ENCODE measurements at regions of chr2 and their contacts with region 1.

Region 1: GRCh38 chr2:137823196-137823595 is 141.1 kb upstream of the HNMT start:
- DNase-seq: no peak
- ATAC-seq: no peak
- H3K4me3 ChIP-seq: no peak overlapping the region
- H3K4me3 Mint-ChIP-seq: no peak overlapping the region
- H3K27ac ChIP-seq: no peak overlapping the region
- H3K27ac Mint-ChIP-seq: no peak overlapping the region
- H3K4me1 ChIP-seq: no peaks in the 10 kb centered on the region
- H3K4me1 Mint-ChIP-seq: no peaks in the 10 kb centered on the region
- H3K27me3 ChIP-seq: no peaks in the 10 kb centered on the region
- H3K27me3 Mint-ChIP-seq: peaks cover 7% of the 10 kb centered on the region
- CTCF ChIP-seq: no peak

Region 2: DNA sequence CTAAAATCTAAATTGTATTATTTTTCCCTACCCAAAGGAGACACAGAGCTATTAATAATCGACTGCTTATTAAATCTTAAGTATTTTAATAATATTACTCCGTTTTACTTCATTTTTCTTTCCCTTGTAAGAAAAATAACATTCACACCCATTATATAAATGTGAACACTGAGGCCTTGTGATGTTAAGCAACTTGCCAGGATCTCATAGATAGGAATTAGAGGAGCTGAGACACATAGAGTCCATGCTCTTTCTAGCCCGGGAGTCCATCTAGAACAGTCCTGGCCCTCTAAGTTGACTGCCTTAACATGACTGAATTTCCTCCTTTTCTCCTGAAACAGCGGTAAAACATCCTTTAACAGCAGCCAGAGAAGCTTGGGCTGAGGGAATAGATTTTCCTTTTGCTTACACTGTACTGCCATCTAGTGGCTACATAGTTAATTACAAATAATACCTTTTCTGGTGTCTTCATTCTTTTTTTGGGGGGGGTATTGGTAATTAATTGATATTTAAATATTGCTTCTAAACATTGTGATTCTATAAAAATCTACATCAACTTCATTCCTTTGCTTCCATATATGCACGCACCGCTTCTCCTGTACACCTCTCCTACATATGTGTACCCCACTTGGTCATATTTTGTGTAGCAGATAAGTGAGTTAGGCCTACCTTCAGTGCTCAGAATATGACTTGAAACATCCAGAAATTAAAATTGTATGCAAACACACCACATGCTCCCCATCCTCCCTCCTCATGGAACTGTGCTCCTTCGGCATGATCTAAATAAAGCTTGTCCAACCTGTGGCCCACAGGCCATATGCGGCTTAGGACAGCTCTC is 15.3 kb after region 1 on chr2:
- CTCF ChIA-PET with region 1: interaction called, 14 read pairs
- POLR2A ChIA-PET with region 1: no interaction called
- intact Hi-C with region 1: no loop called
- DNase-seq: peak in 3 of 9 experiments; percentile 1 to 48 (median 34)
- ATAC-seq: no peak
- H3K4me3 ChIP-seq: no peak overlapping the region
- H3K4me3 Mint-ChIP-seq: no peak overlapping the region
- H3K27ac ChIP-seq: no peak overlapping the region
- H3K27ac Mint-ChIP-seq: no peak overlapping the region
- H3K4me1 ChIP-seq: no peaks in the 10 kb centered on the region
- H3K4me1 Mint-ChIP-seq: no peaks in the 10 kb centered on the region
- H3K27me3 ChIP-seq: no peaks in the 10 kb centered on the region
- H3K27me3 Mint-ChIP-seq: peaks cover 4% of the 10 kb centered on the region
- CTCF ChIP-seq: peak; percentile 70

Region 3: GRCh38 chr2:137857566-137858280 is 34.5 kb after region 1 on chr2:
- CTCF ChIA-PET with region 1: no interaction called
- POLR2A ChIA-PET with region 1: no interaction called
- intact Hi-C with region 1: no loop called
- DNase-seq: no peak
- ATAC-seq: no peak
- H3K4me3 ChIP-seq: no peak overlapping the region
- H3K4me3 Mint-ChIP-seq: no peak overlapping the region
- H3K27ac ChIP-seq: no peak overlapping the region
- H3K27ac Mint-ChIP-seq: no peak overlapping the region
- H3K4me1 ChIP-seq: no peaks in the 10 kb centered on the region
- H3K4me1 Mint-ChIP-seq: no peaks in the 10 kb centered on the region
- H3K27me3 ChIP-seq: no peaks in the 10 kb centered on the region
- H3K27me3 Mint-ChIP-seq: peaks cover 6% of the 10 kb centered on the region
- CTCF ChIP-seq: no peak